Activated CD4-positive, alpha-beta memory T cell treated with anti-CD3 and anti-CD28 coated beads for 36 hours (primary cell): ENCODE measurements at regions of chr5 and their contacts with region 1.

Region 1: DNA sequence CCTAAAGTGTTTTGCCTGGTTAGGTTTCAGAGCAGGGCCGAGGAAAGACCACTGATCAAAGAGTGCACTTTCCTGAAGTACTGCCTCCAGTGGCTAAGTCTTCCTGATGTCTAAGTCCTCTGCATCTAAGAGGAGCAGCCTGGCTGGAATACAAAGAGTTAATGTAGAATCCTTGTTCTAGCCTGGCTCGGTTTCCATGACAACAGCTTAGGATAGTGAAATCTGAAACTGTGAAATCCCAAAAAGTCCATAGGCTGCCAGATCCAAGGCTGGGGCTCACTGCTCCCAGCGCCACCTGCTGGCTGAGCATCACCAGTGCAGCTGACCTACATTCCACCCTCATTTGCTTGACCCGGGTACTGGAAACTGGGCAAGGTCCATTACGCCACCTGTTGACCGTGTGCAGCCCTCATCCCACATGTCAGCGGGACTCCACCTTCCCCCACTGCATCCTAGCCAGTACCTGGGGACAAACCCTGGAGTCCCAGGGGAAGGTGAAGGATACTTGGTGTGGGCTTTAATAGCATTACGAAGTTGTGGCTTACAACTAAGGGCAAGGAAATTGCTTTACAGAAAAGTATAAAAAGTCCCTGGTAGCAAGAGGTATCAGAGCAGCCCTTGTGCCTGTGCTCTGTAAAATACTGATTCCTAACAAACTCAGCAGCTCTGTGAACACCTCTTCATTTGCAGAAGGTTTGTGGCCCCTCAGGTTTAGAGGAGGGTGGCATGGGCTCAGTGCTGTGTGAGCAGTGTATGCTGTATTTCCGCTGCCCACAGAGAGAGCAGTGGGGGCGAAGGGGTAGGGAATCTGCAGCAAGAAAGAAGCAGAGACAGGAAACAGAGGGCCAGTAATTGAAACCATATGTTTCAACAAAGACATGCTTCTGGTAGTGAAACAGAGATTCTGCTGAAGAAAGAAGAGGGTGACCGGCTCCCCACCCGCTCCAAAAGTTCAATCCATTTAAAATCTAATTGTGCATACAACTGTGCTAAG is 36.0 kb downstream of the PCDHGC5 start:
- DNase-seq: peak; percentile 60
- H3K4me3 Mint-ChIP-seq: no peak overlapping the region
- H3K27ac Mint-ChIP-seq: peak overlapping the region; percentile 15
- H3K4me1 Mint-ChIP-seq: peaks cover 36% of the 10 kb centered on the region
- H3K27me3 Mint-ChIP-seq: no peaks in the 10 kb centered on the region

Region 2: GRCh38 chr5:141369994-141370848 is 154.7 kb before region 1 on chr5 and contains the start of gene PCDHGB3:
- CTCF ChIA-PET with region 1: interaction called, 13 read pairs
- POLR2A ChIA-PET with region 1: no interaction called
- intact Hi-C with region 1: no loop called
- DNase-seq: peak; percentile 55
- H3K4me3 Mint-ChIP-seq: peak within 1 kb of the TSS; percentile 68
- H3K27ac Mint-ChIP-seq: no peak within 1 kb of the TSS
- H3K4me1 Mint-ChIP-seq: peaks cover 5% of the 10 kb centered on the region
- H3K27me3 Mint-ChIP-seq: peaks cover 48% of the 10 kb centered on the region
- total RNA-seq, gene PCDHGB3: 0.10 TPM in 1 of 2 experiments, not detected in the other

Region 3: DNA sequence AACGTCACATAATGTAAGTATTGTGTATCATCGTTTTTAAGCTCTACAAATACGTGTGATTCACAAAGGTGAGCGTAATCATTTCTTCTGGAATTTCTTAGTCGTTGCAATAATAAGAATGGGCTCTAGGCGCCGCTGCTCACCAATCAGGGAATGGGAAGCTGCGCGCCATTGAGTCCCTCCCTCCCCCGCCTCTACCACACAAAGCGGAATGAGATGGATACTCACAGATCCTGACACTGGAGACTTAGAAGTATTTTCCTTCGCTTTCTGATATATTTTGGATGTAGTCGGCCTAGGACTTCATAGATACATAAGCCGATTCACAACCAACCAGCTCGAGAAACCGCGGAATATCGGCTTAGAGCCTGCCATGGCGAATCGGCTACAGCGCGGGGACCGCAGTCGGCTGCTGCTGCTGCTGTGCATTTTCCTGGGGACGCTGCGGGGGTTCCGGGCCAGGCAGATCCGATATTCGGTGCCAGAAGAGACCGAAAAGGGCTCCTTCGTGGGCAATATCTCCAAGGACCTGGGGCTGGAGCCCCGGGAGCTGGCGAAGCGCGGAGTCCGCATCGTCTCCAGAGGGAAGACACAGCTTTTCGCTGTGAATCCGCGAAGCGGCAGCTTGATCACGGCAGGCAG is 103.9 kb before region 1 on chr5 and contains the start of gene PCDHGA11:
- CTCF ChIA-PET with region 1: interaction called, 20 read pairs
- POLR2A ChIA-PET with region 1: no interaction called
- intact Hi-C with region 1: no loop called
- DNase-seq: peak; percentile 66
- H3K4me3 Mint-ChIP-seq: peak within 1 kb of the TSS; percentile 72
- H3K27ac Mint-ChIP-seq: no peak within 1 kb of the TSS
- H3K4me1 Mint-ChIP-seq: peaks cover 4% of the 10 kb centered on the region
- H3K27me3 Mint-ChIP-seq: peaks cover 68% of the 10 kb centered on the region
- total RNA-seq, gene PCDHGA11: 0.05 TPM in 1 of 2 experiments, not detected in the other

Region 4: DNA sequence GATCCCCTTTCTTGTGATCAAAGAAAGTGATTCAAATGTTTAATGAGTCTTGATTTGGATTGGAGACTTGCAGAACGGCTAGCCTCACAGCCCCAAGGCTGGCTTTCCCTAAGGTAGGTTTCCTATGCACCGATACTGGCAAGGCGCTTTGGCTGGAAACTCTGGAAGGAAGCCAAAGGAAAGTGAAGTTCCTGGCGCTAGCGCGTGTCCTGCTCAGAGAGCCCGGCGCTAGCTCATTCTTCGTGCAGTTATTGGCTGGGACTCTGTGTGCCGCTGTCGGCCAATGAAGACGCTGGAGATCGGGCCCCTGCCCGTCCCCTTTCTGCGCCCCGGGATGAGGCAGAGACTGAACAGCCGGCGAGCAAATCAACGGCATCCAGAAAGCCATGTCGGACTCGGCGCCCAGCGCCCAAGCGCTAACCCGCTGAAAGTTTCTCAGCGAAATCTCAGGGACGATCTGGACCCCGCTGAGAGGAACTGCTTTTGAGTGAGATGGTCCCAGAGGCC is 49.2 kb before region 1 on chr5 and contains the start of gene PCDHGC3:
- CTCF ChIA-PET with region 1: interaction called, 22 read pairs
- POLR2A ChIA-PET with region 1: no interaction called
- intact Hi-C with region 1: no loop called
- DNase-seq: peak; percentile 72
- H3K4me3 Mint-ChIP-seq: peak within 1 kb of the TSS; percentile 79
- H3K27ac Mint-ChIP-seq: no peak within 1 kb of the TSS
- H3K4me1 Mint-ChIP-seq: peaks cover 20% of the 10 kb centered on the region
- H3K27me3 Mint-ChIP-seq: peaks cover 48% of the 10 kb centered on the region
- total RNA-seq, gene PCDHGC3: not detected

Region 5: DNA sequence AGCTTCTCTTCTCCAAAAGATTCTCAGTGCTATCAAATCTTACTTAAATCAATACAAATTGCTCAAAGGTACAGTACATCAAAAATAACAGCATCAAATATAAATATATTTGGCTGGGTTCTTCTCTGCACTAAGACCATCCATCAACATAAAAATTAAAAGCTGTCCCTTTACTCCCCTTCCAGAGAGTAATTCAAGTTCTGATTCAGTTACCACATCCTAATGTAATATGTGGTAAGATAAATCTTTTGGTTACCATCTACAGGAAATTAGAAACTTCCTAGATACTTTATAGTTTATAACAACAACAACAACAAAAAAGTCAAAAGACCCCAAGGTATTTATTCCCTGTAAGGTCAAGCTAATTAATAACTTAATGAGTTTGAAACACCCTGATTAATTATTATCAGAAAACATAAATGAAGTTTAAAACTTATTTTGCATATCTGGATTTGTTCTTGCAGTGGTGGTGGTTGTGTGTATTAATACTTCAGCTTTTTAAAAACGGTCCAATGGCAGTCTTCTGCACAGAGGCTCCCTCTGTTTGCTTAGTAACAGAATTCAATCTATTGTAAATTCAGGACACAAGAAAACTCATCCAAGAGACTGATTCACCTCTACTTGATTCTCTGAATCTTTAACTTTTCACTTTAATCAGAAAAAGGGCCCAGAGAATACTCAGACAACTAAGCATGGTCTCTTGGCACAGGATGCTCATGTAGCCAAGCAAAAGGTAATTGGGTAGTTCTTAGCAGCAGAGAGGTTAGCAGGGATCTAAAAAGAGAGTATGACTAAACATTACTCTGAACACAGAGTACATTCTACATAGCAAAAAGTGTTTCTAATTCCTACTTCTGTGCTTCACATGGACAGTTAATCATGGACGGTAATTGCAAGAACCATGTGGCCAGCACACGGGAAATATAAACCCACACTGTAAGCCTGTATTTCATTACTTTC is 73.8 kb after region 1 on chr5:
- CTCF ChIA-PET with region 1: no interaction called
- POLR2A ChIA-PET with region 1: no interaction called
- intact Hi-C with region 1: no loop called
- DNase-seq: no peak
- H3K4me3 Mint-ChIP-seq: no peak overlapping the region
- H3K27ac Mint-ChIP-seq: peak overlapping the region; percentile 84
- H3K4me1 Mint-ChIP-seq: peaks cover 73% of the 10 kb centered on the region
- H3K27me3 Mint-ChIP-seq: no peaks in the 10 kb centered on the region